Esophagus squamous epithelium (tissue), 5 donors: ENCODE measurements at regions of chr11 and their contacts with region 1.

Region 1: GRCh38 chr11:62787005-62787759 is at the start of gene TMEM179B:
- DNase-seq: peak; percentile 99
- H3K4me3 ChIP-seq: peak within 1 kb of the TSS; percentile 65 to 100 (median 90)
- H3K27ac ChIP-seq: peak within 1 kb of the TSS; percentile 94 to 100 (median 96)
- H3K4me1 ChIP-seq: peaks cover 29 to 55% (median 35%) of the 10 kb centered on the region in 3 donors
- H3K27me3 ChIP-seq: no peaks in the 10 kb centered on the region
- CTCF ChIP-seq: peak in 5 of 6 experiments; percentile 22 to 63 (median 38)
- POLR2A ChIP-seq: peak; percentile 52 to 98 (median 94)
- total RNA-seq, gene TMEM179B: 35.6 to 60.1 (median 43.3) TPM

Region 2: GRCh38 chr11:62860835-62861563 is 73.8 kb after region 1 on chr11:
- intact Hi-C with region 1: loop called (anchors 5 kb)
- DNase-seq: no peak
- H3K4me3 ChIP-seq: no peak overlapping the region
- H3K27ac ChIP-seq: peak overlapping the region in 2 of 4 donors; percentile 75 to 76
- H3K4me1 ChIP-seq: peaks cover 14 to 72% (median 28%) of the 10 kb centered on the region in 3 donors
- H3K27me3 ChIP-seq: no peaks in the 10 kb centered on the region
- CTCF ChIP-seq: no peak
- POLR2A ChIP-seq: no peak

Region 3: GRCh38 chr11:62880803-62881578 is 93.8 kb after region 1 on chr11 and contains the start of gene SLC3A2:
- intact Hi-C with region 1: loop called (anchors 5 kb)
- DNase-seq: peak; percentile 72
- H3K4me3 ChIP-seq: peak within 1 kb of the TSS; percentile 74 to 99 (median 86)
- H3K27ac ChIP-seq: peak within 1 kb of the TSS; percentile 95 to 100 (median 98)
- H3K4me1 ChIP-seq: peaks cover 44 to 87% (median 48%) of the 10 kb centered on the region in 3 donors
- H3K27me3 ChIP-seq: no peaks in the 10 kb centered on the region
- CTCF ChIP-seq: peak; percentile 65 to 79 (median 68)
- POLR2A ChIP-seq: peak in 3 of 4 donors; percentile 95 to 99 (median 98)
- total RNA-seq, gene SLC3A2: 132 to 373 (median 153) TPM